HepG2 (cell line): ENCODE measurements at regions of chr13 and their contacts with region 1.

Region 1: DNA sequence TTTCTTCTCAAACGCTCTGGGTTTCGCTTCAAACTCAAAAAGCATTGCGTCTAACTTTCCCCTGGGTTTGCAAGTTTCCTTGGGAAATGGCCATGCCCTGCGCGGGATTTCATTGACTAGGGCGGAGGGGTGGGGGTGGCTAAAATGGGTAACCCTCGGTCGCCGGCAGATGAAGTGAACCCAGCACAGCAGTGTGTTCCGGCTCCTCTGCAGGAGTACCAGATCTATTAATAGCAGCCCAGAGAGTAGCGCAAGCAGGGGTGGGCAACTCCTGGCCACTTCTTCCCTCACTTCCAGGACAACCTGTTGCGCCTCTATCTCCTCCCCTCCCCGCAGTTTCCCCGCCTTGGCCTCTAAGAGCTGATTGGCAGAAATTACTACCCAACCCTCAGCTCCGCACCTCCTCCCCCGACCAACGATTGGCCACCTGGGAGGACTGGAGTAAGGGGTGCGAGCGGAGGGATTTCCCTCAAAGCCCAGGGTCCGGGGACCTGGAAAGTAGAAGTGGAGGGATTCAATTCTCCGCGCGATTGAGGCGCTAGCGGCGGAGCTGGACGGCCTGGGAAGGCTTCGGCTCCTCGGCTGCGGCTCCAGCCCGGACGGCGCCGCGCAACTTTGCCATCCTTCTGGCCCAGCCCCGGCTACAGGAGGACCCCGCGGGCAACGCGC is at the start of gene FREM2:
- DNase-seq: no peak
- ATAC-seq: peak; percentile 47; the same call in 2 of the 3 replicates
- H3K4me3 ChIP-seq: no peak within 1 kb of the TSS
- H3K27ac ChIP-seq: no peak within 1 kb of the TSS
- H3K4me1 ChIP-seq: no peaks in the 10 kb centered on the region
- H3K27me3 ChIP-seq: peaks cover 2 to 15% of the 10 kb centered on the region in 2 experiments; a peak in 3 of 5 replicates
- CTCF ChIP-seq: no peak
- EP300 ChIP-seq: no peak
- POLR2A ChIP-seq: no peak
- RAD21 ChIP-seq: no peak
- total RNA-seq, gene FREM2: not detected in 2 replicates

Region 2: DNA sequence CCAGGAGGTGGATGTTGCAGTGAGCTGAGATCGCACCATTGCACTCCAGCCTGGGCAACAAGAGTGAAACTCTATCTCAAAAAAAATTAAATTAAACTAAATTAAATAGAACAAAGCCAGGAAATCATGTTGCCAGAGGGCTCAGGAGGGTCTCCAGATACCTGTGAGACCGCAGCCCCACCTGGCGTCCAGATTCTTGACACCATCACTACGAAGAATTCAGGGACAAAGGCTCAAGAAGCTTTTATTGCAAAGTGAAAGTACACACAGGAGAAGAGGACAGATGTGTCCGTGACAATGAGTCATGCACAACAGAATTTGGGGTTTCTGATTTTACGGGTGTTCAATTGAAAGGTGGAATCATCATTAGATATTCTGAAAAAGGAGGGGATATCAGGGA is 227.4 kb after region 1 on chr13:
- CTCF ChIA-PET with region 1: no interaction called
- POLR2A ChIA-PET with region 1: no interaction called
- in situ Hi-C with region 1: no loop called
- intact Hi-C with region 1: loop called (anchors 1 kb)
- DNase-seq: no peak
- ATAC-seq: no peak
- H3K4me3 ChIP-seq: no peak overlapping the region
- H3K27ac ChIP-seq: no peak overlapping the region
- H3K4me1 ChIP-seq: peaks cover 8% of the 10 kb centered on the region
- H3K27me3 ChIP-seq: 0 out of 5 replicates have a peak, but pooled peaks cover 0 to 7% of the 10 kb centered on the region in 2 experiments
- CTCF ChIP-seq: 0 out of 2 replicates have a peak, but pooled peaks have one; percentile 9
- EP300 ChIP-seq: no peak
- POLR2A ChIP-seq: no peak
- RAD21 ChIP-seq: no peak